Left cardiac atrium (tissue), 4 donors: ENCODE measurements at regions of chr16 and their contacts with region 1.

Region 1: GRCh38 chr16:31032736-31033708 is at the start of gene STX4:
- DNase-seq: peak; percentile 99
- ATAC-seq: peak; percentile 95
- total RNA-seq, gene STX4: 45.8 to 53.4 TPM

Region 2: DNA sequence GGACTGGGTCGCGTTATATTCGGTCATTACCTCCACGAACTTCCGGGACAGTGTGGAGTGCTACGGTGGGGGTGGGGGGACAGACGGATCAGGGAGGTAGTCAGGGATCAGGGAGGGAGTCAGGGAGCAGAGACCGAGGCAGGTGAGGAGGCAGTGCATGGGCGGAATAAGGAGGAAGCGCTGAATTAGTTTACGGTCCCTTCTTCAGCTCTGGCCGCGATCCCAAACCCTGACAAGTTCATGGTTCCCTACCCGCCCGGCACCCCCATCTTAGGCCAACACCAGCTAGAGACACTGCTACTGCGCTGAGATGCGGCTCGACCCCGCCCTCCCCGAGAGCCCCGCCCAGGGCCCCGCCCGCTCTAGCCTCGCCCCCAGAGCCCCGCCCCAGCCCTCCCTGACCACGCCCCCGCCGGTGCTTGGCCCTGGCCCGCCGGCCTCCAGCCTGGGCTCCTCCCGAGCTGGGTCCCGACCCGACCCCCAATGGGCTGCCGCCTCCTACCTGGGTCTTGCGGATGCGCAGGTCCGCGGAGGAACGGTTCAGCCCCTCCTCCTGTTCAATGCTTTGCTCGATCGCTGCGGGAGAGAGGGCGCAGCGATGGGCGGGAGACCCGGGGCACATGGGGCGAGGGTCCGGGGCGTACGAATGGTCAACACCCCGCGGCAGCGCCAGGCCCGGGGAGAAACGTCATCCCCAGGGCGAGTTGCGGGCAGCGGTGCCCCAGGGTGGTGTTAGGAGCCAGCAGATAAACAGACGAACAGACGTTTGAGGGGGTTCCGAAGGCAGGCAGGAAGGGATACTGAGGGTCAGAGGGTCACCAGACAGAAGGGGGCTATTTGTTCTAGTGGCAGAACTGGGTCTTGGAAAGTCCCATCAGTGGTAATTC is 35.8 kb before region 1 on chr16:
- intact Hi-C with region 1: loop called in 1 of 2 experiments (anchors 5 kb)
- DNase-seq: peak; percentile 86
- ATAC-seq: peak; percentile 94 to 97

Region 3: DNA sequence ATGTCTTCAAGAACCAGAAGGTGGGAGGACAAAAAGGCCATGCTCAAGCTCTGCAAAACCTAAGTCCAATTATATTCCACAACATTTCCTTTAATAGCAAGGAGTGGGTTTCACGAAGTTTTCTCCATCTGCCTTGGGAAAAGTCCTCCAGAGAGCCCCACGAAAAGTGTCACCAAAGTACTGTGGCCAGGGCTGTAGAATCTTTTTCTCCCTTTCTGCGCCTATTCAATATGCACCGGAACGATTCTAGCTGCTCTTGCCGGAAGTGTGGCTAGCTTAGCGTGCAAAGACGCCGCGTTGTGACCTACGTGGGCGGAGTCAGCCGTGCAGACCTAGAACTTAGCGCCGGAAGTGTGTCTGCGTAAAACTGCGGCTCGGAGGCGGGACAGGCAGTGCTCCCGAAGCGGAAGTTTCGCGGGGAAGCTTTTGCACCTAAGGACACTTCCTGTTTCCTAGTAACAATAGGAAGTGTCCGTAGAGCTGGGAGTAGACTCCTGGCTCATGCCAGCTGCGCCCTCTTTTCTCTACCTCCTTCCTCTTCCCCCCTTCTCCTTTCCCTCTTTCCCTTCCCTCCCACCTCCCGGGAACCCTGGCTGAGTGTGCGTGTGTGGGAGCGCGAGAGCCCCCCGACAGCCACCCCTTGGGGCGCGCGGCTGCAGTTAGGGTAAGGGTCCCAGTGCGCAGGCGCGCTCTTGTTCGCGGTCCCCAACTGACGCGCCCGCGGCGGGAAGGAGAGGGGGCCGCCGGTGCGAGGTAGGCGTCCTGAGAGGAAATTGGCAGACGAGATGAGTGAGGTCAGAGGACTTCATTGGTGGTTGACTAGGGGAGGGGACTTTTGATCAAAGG is 41.2 kb after region 1 on chr16 and contains the starts of genes ZNF646 and ZNF668:
- intact Hi-C with region 1: loop called in 1 of 2 experiments (anchors 2 kb)
- DNase-seq: peak; percentile 99
- ATAC-seq: peak; percentile 93 to 95
- total RNA-seq, gene ZNF646: 7.6 to 8.2 TPM
- total RNA-seq, gene ZNF668: 5.5 to 6.6 TPM